Activated naive CD4-positive, alpha-beta T cell treated with anti-CD3 and anti-CD28 coated beads for 36 hours (primary cell): ENCODE measurements at regions of chr1 and their contacts with region 1.

Region 1: DNA sequence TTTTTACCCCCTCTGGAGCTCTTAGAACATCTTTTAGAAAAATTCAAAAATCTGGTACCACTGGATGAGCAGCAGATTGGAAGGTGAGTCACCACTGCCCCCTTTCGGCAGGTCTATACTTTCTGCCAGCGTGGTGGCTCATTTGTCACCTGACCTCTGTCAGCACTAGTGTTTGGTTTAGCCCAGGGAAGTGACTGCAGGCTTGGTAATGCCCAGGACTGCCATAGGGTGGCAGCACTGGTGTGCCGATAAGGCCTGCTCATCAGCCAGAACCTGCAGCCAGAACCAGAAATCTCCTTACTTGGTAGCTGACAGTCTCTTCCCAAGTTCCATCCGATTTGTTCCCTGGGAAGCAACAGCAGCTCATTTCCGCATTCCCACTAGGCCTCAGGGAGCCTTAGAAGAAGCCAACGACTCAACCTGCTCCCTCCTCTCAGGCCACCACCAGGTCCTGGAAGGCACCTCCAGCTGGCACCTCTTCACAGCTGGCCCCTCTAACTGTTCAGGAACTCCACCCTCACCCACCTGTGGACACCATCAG is 6.8 kb downstream of the SMIM12 start:
- DNase-seq: peak; percentile 96
- H3K4me3 Mint-ChIP-seq: no peak overlapping the region
- H3K27ac Mint-ChIP-seq: peak overlapping the region; percentile 2
- H3K4me1 Mint-ChIP-seq: peaks cover 29% of the 10 kb centered on the region
- H3K27me3 Mint-ChIP-seq: no peaks in the 10 kb centered on the region

Region 2: GRCh38 chr1:34371829-34372532 is 480.8 kb before region 1 on chr1:
- CTCF ChIA-PET with region 1: no interaction called
- intact Hi-C with region 1: no loop called
- DNase-seq: no peak
- H3K4me3 Mint-ChIP-seq: no peak overlapping the region
- H3K27ac Mint-ChIP-seq: no peak overlapping the region
- H3K4me1 Mint-ChIP-seq: peaks cover under 1% of the 10 kb centered on the region
- H3K27me3 Mint-ChIP-seq: peaks cover 27% of the 10 kb centered on the region

Region 3: GRCh38 chr1:34389974-34390373 is 462.8 kb before region 1 on chr1:
- CTCF ChIA-PET with region 1: no interaction called
- intact Hi-C with region 1: no loop called
- DNase-seq: no peak
- H3K4me3 Mint-ChIP-seq: no peak overlapping the region
- H3K27ac Mint-ChIP-seq: no peak overlapping the region
- H3K4me1 Mint-ChIP-seq: no peaks in the 10 kb centered on the region
- H3K27me3 Mint-ChIP-seq: peaks cover 14% of the 10 kb centered on the region

Region 4: GRCh38 chr1:34470401-34470800 is 382.3 kb before region 1 on chr1:
- CTCF ChIA-PET with region 1: no interaction called
- intact Hi-C with region 1: no loop called
- DNase-seq: no peak
- H3K4me3 Mint-ChIP-seq: no peak overlapping the region
- H3K27ac Mint-ChIP-seq: no peak overlapping the region
- H3K4me1 Mint-ChIP-seq: no peaks in the 10 kb centered on the region
- H3K27me3 Mint-ChIP-seq: peaks cover 3% of the 10 kb centered on the region

Region 5: DNA sequence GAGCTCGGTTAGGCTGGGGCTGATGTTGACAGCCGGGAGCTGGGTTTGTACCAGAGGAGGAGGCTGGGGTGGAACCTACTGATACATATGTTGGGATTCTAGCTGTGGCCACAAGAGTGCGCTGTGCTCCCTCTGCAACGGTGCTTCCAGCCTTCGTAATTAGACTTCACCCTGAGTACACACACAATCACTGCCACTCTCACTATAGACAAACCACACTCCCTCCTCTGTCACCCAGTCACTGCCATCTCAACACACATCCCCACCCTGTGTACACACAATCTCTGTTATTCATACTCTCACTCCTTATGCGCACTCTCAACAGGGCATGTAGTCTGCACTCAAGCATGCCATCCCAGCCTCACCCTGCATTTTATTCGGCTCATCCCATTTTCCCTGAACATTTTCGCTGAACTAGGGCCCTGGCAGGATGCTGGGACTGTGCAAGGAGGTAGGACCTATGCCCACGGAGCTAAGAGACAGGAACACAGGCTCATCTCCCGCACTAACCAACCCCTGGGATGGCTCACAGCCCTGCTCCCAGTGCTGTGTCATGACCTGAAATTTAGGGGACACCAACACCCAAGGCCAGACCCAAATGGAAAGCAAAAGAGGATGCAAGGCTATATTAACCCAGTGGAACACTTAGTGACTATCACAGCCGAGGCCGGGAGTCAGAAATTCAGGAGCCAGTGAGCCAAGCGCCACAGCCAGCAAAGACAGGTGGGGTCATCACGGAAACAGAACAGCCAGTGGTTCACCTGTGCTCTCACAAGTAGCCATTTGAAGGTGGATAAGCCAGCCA is 66.0 kb before region 1 on chr1:
- CTCF ChIA-PET with region 1: interaction called, 19 read pairs
- intact Hi-C with region 1: loop called (anchors 1 kb)
- DNase-seq: peak; percentile 86
- H3K4me3 Mint-ChIP-seq: no peak overlapping the region
- H3K27ac Mint-ChIP-seq: no peak overlapping the region
- H3K4me1 Mint-ChIP-seq: peaks cover 4% of the 10 kb centered on the region
- H3K27me3 Mint-ChIP-seq: peaks cover 24% of the 10 kb centered on the region

Region 6: GRCh38 chr1:34800214-34800613 is 52.5 kb before region 1 on chr1:
- CTCF ChIA-PET with region 1: interaction called, 6 read pairs
- intact Hi-C with region 1: loop called (anchors 1 kb)
- DNase-seq: peak; percentile 69
- H3K4me3 Mint-ChIP-seq: no peak overlapping the region
- H3K27ac Mint-ChIP-seq: peak overlapping the region; percentile 71
- H3K4me1 Mint-ChIP-seq: peaks cover 39% of the 10 kb centered on the region
- H3K27me3 Mint-ChIP-seq: no peaks in the 10 kb centered on the region

Region 7: DNA sequence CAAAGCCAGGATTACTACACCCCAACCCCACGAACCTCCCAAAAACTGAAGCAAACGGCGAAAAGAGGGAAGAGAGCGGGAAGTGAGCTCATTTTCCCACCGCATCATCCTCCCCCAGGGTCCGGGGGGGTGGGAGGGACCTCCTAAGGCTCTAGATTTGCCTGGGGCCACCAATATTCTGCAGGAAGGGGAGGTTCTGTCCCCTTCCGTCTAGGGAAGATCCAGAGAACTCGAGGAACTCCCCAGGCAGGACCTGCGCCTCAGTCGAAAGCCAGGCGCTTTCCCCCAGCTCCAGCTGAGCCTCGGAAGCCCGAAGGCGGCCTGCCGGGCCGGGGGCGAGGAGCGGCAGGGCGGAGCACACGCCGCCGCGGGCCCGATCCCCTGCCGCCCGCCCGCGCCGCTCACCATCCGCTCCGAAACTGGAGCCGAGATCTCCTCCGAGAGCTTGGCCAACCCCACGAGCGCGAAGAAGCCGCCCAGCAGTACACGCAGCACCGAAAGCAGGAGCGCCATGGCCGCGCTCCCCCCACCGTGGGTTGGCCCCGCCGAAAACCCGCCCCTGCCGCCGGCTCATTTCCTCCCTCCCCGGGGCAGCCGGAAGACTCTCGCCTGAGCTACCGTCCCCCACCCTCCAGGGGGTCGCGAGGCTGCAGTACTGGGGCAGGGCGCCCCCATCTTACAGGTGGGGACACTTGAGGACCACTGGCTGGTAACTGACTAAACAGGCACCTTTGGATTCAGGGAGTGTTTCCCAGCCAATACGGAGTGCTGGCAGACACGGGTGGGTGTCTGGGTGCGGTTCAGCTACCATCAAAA is 132.3 kb after region 1 on chr1 and contains the start of gene TMEM35B:
- CTCF ChIA-PET with region 1: interaction called, 10 read pairs
- intact Hi-C with region 1: no loop called
- DNase-seq: peak; percentile 81
- H3K4me3 Mint-ChIP-seq: peak within 1 kb of the TSS; percentile 97
- H3K27ac Mint-ChIP-seq: peak within 1 kb of the TSS; percentile 93
- H3K4me1 Mint-ChIP-seq: peaks cover 49% of the 10 kb centered on the region
- H3K27me3 Mint-ChIP-seq: no peaks in the 10 kb centered on the region
- total RNA-seq, gene TMEM35B: 18.2 to 19.9 TPM

Region 8: GRCh38 chr1:35557292-35558063 is 704.7 kb after region 1 on chr1 and contains the starts of genes KIAA0319L and NCDN:
- CTCF ChIA-PET with region 1: no interaction called
- intact Hi-C with region 1: loop called (anchors 10 kb)
- DNase-seq: peak; percentile 98
- H3K4me3 Mint-ChIP-seq: peak within 1 kb of the TSS; percentile 95
- H3K27ac Mint-ChIP-seq: peak within 1 kb of the TSS; percentile 92
- H3K4me1 Mint-ChIP-seq: peaks cover 46% of the 10 kb centered on the region
- H3K27me3 Mint-ChIP-seq: no peaks in the 10 kb centered on the region
- total RNA-seq, gene KIAA0319L: 22.6 to 24.2 TPM
- total RNA-seq, gene NCDN: 12.1 to 13.4 TPM